Astrocyte of the cerebellum (primary cell): ENCODE measurements at regions of chr16 and their contacts with region 1.

Region 1: GRCh38 chr16:57984331-57985203 is 13.6 kb upstream of the CNGB1 start:
- DNase-seq: peak; percentile 38
- H3K4me3 ChIP-seq: peak overlapping the region; percentile 50
- CTCF ChIP-seq: no peak

Region 2: DNA sequence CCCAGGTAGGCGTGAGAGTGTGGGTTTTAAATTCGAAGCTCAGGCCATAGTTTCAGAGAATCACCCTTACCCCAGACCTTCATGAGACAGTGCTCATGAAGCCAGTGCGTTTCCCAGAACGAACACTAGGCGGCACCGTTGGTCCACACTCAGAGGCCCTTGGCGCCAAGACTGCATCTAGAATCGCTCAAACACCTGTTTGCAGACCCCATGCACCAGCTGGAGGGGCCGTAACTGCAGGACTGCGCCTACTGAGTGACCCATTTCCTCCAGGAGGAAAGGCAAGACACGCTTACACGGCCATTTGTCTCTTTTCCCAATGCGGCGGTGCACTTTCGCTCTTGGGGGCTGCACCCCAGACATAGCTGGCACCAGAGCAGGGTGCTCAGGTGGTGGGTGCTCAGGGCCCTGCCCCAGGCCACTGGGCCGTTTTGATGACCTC is 408.1 kb before region 1 on chr16:
- in situ Hi-C with region 1: loop called (anchors 10 kb)
- DNase-seq: peak; percentile 49
- H3K4me3 ChIP-seq: no peak overlapping the region
- CTCF ChIP-seq: peak; percentile 99

Region 3: DNA sequence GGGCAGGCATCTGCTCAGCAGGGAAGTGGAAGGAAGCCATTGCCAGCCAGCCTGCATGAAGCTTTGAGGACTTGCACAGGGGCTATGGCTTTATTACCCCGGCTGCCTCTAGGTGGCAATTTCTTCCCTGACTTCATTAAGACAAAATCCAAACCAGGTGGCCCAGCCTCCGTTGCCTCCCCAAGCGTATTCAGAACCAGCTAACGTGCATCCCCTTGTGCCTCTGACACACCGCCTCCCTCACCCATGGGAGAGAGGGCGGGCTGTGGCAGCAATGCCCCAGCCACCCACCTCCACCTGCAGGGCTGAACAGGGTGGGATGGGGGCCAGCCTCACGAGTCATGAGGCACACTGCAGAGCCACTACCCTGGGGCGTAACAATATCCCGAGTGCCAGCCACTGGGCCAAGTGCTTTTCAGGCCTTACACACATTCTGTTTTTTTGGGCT is 189.1 kb before region 1 on chr16:
- in situ Hi-C with region 1: loop called (anchors 25 kb)
- DNase-seq: peak; percentile 40
- H3K4me3 ChIP-seq: no peak overlapping the region
- CTCF ChIP-seq: peak; percentile 61

Region 4: DNA sequence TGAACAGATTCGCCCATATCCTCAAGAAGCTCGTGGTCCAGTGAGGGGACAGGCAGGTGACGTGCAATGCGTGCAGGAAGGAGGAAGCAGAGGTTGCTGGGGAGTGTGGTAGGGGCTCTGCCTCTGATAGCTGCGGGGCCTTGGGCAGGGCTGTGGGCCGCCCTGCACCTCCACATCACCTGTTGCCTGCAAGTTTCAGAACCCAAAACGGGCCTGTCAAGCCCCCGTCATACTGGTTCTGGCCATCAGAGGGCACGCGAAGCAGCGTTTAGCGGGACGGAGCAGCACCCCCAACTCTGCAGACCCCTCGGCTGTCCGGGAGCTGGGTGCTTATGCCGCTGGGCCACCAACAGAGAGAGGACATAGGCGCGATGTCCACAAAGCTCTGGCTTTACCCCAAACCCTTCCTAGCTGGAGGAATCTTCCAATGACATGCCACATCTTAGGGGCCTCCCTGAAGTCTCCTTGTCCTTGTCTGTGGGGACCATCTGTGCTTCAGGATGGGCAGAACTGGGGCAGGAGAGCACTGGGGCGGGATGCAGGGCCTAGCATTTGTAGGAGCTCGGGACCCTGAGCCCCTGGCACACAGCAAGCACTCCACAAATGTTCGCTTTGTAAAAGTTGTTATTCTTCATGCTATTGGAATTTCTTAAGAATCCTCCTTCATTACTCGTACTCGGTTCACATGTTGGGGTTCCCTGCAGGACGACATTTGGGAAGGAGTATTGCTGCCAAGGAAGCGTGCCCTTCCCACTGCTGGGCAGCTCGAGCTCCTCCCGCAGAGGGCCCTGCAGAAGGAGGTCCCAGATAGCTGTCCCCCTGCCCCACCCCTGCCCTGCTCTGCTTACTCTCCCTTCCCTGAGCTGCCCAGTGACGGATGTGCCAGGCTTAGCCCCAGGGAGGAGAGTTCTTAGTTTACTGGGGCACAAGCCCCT is 77.9 kb before region 1 on chr16:
- in situ Hi-C with region 1: loop called (anchors 5 kb)
- DNase-seq: no peak
- H3K4me3 ChIP-seq: no peak overlapping the region
- CTCF ChIP-seq: peak; percentile 64

Region 5: GRCh38 chr16:57916735-57917451 is 67.7 kb before region 1 on chr16:
- in situ Hi-C with region 1: no loop called
- DNase-seq: no peak
- H3K4me3 ChIP-seq: no peak overlapping the region
- CTCF ChIP-seq: no peak

Region 6: DNA sequence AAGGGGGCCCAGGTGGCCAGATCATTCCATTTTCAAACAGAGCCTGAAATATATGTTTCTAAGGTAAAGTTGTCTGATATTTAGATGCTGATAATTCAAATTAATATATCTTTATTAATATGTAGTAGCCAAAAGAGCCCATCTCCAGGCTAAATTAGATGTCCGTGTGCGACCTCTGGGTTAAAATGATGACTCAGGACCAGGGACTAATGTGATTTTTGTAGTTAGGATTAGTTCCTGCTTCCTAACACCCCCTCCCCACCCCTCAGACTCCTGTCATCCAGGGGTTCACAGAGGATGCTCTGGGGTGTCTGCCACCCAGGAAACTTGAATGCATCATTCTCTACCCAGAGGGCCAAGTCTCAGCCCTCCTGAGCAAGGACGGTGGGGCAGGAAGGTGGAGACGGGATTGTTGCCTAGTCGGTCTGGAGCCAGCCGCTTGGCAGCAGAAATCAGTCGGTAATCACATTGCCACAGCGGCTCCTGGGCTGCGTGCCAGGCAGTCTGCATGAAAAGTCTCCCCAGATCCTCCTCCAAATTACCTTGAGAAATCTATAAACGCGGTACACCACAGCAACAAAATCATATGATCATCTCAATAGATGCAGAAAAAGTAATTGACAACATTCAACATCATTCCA is 43.4 kb before region 1 on chr16:
- in situ Hi-C with region 1: loop called (anchors 5 kb)
- DNase-seq: peak; percentile 26
- H3K4me3 ChIP-seq: no peak overlapping the region
- CTCF ChIP-seq: no peak